PC-3 (cell line): ENCODE measurements at regions of chr10 and their contacts with region 1.

Region 1: DNA sequence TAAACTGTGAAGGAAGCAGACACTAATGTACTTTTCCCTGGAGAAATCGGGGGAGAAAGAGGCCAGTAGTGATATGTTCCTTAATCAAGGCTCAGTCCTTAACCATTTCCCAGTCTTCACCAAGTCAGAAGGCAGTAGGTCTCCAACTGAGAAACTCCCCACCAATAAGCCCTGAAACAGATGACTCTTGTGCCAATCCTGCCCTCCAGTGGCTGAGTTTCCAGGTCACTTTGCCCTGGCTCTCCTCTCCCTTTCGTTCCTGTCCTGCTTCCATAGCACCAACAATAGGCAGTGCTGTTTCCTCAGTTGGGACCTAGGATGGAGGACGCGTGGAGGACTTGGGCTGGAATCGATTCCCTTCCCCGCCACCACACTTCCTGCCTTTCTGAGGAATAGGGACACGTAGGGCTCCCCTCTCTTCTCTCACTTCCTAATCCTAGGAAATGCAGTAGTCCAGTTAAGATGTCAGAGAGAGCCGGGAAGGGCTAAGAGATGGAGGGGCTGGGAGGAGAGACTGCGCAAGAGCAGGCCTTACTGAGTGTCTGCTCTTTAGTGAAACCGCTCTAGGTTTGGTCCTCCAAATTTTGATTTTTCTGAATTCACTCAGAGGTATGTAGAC is 23.4 kb downstream of the ATOH7 start:
- DNase-seq: peak; percentile 96
- ATAC-seq: peak; percentile 95
- H3K4me3 ChIP-seq: no peak overlapping the region
- H3K27ac ChIP-seq: no peak overlapping the region
- H3K4me1 ChIP-seq: no peaks in the 10 kb centered on the region
- H3K27me3 ChIP-seq: no peaks in the 10 kb centered on the region
- CTCF ChIP-seq: peak; percentile 99

Region 2: GRCh38 chr10:68082872-68083271 is 125.7 kb before region 1 on chr10:
- CTCF ChIA-PET with region 1: interaction called, 9 read pairs
- POLR2A ChIA-PET with region 1: no interaction called
- intact Hi-C with region 1: loop called (anchors 1 kb)
- DNase-seq: peak; percentile 89
- ATAC-seq: peak; percentile 14; the same call in 1 of the 2 replicates
- H3K4me3 ChIP-seq: no peak overlapping the region
- H3K27ac ChIP-seq: peak overlapping the region; percentile 57
- H3K4me1 ChIP-seq: peaks cover 63% of the 10 kb centered on the region
- H3K27me3 ChIP-seq: no peaks in the 10 kb centered on the region
- CTCF ChIP-seq: peak; percentile 98

Region 3: DNA sequence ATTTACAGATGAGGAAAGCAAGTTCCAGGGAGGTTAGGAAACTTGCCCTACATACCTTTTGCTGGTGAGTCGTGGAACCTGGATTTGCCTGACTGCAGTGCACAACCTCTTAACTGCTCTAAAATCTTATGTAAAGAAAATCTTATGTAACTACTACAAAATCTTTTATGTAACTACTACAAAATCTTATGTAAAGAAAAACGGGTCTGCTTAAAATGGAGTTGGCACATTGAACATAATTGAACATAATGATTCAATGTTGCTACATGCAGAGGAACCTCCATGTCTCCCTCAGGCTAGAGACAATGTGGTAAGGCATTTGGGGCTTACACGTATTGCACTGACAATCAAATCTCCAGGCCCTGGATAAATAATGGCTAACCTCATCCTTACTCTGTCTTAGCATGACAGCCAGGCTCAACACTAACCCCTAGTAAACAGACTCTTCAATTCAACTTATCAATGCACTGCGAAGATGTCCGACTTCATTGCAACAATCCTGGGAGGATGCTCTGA is 42.1 kb after region 1 on chr10:
- CTCF ChIA-PET with region 1: interaction called, 4 read pairs
- POLR2A ChIA-PET with region 1: interaction called, 5 read pairs
- intact Hi-C with region 1: loop called (anchors 1 kb)
- DNase-seq: no peak
- ATAC-seq: no peak
- H3K4me3 ChIP-seq: no peak overlapping the region
- H3K27ac ChIP-seq: no peak overlapping the region
- H3K4me1 ChIP-seq: no peaks in the 10 kb centered on the region
- H3K27me3 ChIP-seq: peaks cover 6% of the 10 kb centered on the region; the same call in 1 of the 2 replicates
- CTCF ChIP-seq: no peak

Region 4: GRCh38 chr10:68331455-68332258 is 123.1 kb after region 1 on chr10 and contains the start of gene HNRNPH3:
- CTCF ChIA-PET with region 1: interaction called, 18 read pairs
- POLR2A ChIA-PET with region 1: no interaction called
- intact Hi-C with region 1: no loop called
- DNase-seq: peak; percentile 100
- ATAC-seq: peak; percentile 74
- H3K4me3 ChIP-seq: peak within 1 kb of the TSS; percentile 87
- H3K27ac ChIP-seq: peak within 1 kb of the TSS; percentile 82
- H3K4me1 ChIP-seq: peaks cover 44% of the 10 kb centered on the region
- H3K27me3 ChIP-seq: no peaks in the 10 kb centered on the region
- CTCF ChIP-seq: no peak
- total RNA-seq, gene HNRNPH3: 40.5 and 77.5 TPM in 2 replicates

Region 5: DNA sequence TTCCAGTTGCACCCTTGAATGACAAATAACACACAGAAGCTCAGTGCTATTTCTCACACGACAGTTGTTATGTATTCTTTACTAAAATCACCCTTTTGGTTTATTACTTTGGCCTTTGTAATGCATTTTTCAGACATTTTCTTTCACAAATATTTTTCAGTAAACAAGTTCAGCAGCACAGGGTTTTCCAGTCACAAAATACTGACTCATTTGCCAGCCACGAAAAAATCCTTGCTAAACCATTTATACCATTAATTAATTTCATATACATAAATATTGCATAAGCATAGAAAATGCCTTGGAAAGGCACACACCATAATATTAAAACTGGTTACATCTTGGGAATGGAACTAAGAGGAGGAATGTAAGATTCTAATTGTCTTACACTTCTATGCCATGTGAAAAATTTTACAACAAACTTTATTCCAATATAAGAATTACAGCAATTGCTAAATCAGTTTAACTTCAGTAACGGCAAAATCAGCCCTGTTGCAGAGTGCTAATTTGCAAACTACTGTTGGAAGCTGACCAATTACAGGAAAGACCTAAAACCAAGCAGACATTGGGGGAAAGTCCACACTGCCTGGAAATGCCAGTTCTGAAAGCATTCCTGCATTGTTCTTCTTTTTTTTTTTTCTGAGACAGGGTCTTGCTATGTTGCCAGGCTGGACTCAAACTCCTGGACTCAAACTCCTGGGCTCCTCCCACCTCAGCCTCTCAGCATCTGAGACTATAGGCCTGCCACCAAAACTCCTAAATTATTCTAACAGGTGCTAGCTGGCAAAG is 155.8 kb after region 1 on chr10:
- CTCF ChIA-PET with region 1: no interaction called
- POLR2A ChIA-PET with region 1: interaction called, 12 read pairs
- intact Hi-C with region 1: no loop called
- DNase-seq: no peak
- ATAC-seq: no peak
- H3K4me3 ChIP-seq: no peak overlapping the region
- H3K27ac ChIP-seq: no peak overlapping the region
- H3K4me1 ChIP-seq: no peaks in the 10 kb centered on the region
- H3K27me3 ChIP-seq: no peaks in the 10 kb centered on the region
- CTCF ChIP-seq: no peak

Region 6: DNA sequence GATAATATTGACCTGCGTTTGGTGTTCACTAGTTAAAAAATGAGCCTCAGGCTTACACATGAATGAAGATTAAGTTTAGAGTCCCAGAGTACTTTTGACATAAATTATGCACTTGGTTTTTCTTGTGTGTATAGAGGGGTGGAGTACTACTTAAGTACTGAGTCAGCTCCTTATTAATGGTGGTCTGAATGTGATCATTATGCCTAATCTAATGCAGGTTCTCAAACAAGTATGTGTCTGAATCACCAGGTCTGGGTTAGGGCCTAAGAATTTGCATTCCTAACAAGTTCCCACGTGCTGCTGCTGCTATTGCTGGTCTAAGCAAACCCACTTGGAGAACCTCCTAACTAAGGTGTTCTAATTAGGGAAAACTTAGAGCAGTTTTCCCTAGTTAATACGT is 588.1 kb after region 1 on chr10:
- CTCF ChIA-PET with region 1: no interaction called
- POLR2A ChIA-PET with region 1: no interaction called
- intact Hi-C with region 1: no loop called
- DNase-seq: peak; percentile 25
- ATAC-seq: peak; percentile 80
- H3K4me3 ChIP-seq: no peak overlapping the region
- H3K27ac ChIP-seq: no peak overlapping the region
- H3K4me1 ChIP-seq: no peaks in the 10 kb centered on the region
- H3K27me3 ChIP-seq: no peaks in the 10 kb centered on the region
- CTCF ChIP-seq: no peak